ENCODE measurements at regions of chr2 and their contacts with region 1.

Region 1: GRCh38 chr2:137865954-137866540 is 98.2 kb upstream of the HNMT start:
- DNase-seq: peak; percentile 53
- ATAC-seq: peak; percentile 91
- H3K4me3 ChIP-seq: no peak overlapping the region
- H3K27ac ChIP-seq: no peak overlapping the region
- H3K4me1 ChIP-seq: no peaks in the 10 kb centered on the region
- H3K27me3 ChIP-seq: no peaks in the 10 kb centered on the region
- CTCF ChIP-seq: peak; percentile 62 to 81 (median 77); a peak in 5 of 6 replicates
- POLR2A ChIP-seq: no peak
- RAD21 ChIP-seq: peak; percentile 82

Region 2: DNA sequence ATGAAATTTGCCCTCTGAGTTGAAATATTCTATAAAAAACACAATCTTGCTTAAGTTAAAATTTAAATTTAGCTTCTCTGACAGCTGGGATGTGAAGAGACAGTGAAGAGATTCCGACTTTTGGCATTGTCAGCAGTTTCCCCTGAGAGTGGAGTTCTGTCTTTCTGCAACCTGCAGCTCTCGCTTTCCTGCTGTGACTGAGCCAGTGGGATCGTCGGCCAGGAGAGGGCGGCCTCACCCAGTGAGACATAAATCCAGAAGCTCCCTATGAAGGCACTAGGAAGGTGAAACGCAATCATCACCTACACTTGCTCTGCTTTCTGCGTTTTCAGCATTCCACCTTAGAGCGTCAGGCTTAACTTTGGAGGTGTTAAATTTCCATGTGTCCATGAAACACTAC is 22.8 kb after region 1 on chr2:
- CTCF ChIA-PET with region 1: interaction called, 18 read pairs
- POLR2A ChIA-PET with region 1: no interaction called
- RAD21 ChIA-PET with region 1: interaction called in 1 of 2 experiments, 3 read pairs
- intact Hi-C with region 1: loop called (anchors 1 kb)
- DNase-seq: peak; percentile 10
- ATAC-seq: peak; percentile 69
- H3K4me3 ChIP-seq: no peak overlapping the region
- H3K27ac ChIP-seq: no peak overlapping the region
- H3K4me1 ChIP-seq: peaks cover 0 to 4% of the 10 kb centered on the region in 2 experiments; a peak in 1 of 4 replicates
- H3K27me3 ChIP-seq: no peaks in the 10 kb centered on the region
- CTCF ChIP-seq: peak; percentile 45 to 74 (median 68); a peak in 5 of 6 replicates
- POLR2A ChIP-seq: no peak
- RAD21 ChIP-seq: peak; percentile 63

Region 3: DNA sequence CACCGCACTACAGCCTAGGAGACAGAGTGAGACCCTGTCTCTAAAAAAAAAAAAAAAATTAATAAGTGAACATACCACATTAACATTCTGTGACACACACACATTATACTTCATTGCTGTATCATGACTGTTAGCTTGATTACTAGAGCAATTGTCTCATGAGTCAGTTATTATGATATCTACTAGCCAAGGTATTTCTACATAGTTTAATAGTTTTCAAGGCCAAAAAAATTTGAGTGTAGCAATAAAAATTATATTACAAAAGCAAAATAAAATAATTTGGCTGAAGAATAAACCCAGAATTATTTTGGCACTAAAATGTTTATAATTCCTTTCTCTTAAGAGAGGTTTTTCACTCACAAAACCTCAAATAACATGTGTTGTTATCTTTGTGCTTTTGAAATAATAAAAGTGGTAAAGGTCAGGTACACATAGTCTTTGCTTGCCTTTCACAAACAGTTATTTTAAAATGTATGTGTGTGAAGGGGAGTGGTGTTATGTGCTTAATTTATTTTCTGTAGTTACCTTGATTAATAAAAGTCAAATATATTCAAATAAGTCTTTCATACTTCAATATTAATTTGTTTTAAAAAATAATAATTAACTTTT is 498.6 kb after region 1 on chr2:
- CTCF ChIA-PET with region 1: no interaction called
- POLR2A ChIA-PET with region 1: no interaction called
- RAD21 ChIA-PET with region 1: no interaction called
- intact Hi-C with region 1: loop called (anchors 5 kb)
- DNase-seq: no peak
- ATAC-seq: no peak
- H3K4me3 ChIP-seq: no peak overlapping the region
- H3K27ac ChIP-seq: no peak overlapping the region
- H3K4me1 ChIP-seq: no peaks in the 10 kb centered on the region
- H3K27me3 ChIP-seq: no peaks in the 10 kb centered on the region
- CTCF ChIP-seq: no peak
- POLR2A ChIP-seq: no peak
- RAD21 ChIP-seq: no peak